Gastrocnemius medialis (tissue), 4 donors: ENCODE measurements at regions of chr10 and their contacts with region 1.

Region 1: DNA sequence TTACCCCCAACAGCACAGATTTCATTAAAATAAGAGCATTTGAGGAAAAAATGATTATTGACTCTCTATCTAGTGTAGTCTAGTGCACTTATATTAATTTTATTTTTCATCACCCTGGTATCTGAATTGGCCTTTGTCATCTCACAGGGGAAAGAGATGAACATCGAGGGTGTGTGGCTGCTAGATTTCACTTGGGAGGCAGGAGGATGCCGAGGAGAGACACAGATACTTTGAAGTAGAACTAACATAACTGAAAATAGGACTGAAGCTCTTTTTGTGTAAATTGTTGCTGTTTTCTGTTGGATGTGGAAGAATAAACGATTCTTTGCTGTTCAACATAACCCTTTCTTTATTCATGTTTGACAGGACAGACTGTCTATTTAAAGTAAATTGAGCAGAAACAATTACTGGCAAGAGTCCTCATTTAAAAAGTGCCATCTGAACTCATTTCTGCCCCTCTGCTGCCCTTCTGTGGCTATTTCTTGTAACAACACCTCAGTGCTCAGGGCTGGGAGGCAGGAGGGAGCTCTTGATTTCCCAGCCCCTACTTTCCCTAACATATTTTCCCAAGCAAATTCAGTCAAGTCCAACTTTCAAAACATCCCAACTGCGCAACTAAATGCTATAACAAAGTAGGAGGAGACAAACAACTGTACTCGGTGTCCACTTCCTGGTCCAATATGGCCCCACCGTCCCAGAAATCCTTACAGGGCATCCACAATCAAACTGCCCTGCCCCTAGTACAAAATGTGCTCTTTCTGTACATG is 15.6 kb downstream of the LYZL1 start:
- DNase-seq: peak; percentile 13 to 27
- ATAC-seq: peak; percentile 71 to 74
- H3K4me3 ChIP-seq: no peak overlapping the region
- H3K27ac ChIP-seq: no peak overlapping the region
- H3K4me1 ChIP-seq: no peaks in the 10 kb centered on the region
- H3K27me3 ChIP-seq: no peaks in the 10 kb centered on the region
- CTCF ChIP-seq: peak; percentile 56 to 79 (median 72)
- POLR2A ChIP-seq: no peak

Region 2: DNA sequence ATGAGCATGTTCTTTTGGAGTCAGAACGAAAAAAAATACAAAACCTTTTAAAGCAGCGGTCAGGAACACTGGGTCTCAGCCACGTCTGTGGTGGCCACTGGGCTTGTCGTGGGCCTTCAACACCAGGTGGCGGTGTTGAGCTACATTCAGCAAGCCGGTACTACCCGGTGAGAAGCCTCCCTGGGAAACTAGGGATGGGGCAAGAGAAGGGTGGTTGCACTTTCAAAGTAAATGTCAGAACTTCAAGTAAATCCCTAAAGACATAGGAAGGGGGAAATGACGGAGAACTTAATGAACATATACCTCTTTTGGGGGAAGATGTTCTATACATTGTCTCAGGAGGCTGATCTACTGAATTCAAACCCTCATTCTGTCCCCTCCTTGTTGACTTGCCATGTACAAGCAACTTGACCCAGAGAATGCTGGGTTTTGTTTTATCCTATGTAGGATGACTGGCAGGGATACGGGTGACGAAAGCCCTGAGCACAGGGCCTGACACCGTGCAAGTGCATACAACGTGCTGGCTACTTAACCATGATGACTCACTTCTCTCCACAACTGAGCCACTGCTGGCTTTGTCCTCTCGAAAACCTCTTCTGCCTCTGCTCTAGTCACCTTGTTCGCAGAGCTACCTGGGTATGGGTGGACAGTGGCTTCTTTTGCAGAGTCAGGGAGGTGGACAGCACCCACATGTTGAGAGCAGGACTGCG is 676.1 kb before region 1 on chr10:
- in situ Hi-C with region 1: loop called in 1 of 4 experiments (anchors 10 kb)
- intact Hi-C with region 1: loop called (anchors 2 kb)
- DNase-seq: peak; percentile 40 to 61
- ATAC-seq: peak; percentile 72 to 89
- H3K4me3 ChIP-seq: no peak overlapping the region
- H3K27ac ChIP-seq: no peak overlapping the region
- H3K4me1 ChIP-seq: no peaks in the 10 kb centered on the region
- H3K27me3 ChIP-seq: no peaks in the 10 kb centered on the region
- CTCF ChIP-seq: peak; percentile 48 to 90 (median 72)
- POLR2A ChIP-seq: no peak

Region 3: DNA sequence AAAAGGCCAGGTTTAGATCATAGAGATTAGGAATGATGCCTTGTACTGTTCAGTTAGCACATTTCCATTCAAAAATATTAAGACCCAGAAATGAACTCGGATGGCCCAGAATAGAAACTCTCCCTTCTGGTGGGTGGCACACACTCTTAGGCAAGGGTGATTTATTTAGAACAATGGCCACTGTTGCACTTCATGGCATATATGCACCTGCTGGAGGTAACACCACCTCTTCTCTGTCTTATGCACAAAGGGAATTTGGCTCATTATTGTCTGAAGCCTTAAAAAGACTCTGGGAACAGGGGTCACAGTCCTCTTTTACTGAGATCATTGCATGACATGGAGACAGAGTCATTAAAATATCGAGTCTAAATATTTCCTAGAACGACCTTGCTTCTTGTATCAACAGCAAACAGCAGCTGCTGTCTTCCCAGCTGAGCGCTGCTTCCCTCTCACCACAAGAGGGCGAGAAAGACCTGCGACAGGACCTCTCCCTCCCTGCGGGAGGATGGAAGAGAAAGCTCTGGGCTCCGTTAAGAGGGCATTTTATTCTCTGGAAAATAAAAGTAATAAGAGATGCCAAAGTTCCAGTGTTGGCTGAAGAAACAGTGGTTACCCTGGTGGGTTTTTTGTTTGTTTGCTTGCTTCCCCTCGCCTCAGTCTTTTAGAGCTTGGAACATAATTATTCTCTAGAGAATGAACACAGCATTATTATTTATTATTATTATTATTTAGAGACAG is 640.7 kb before region 1 on chr10:
- in situ Hi-C with region 1: loop called (anchors 10 kb)
- intact Hi-C with region 1: loop called (anchors 1 kb)
- DNase-seq: peak; percentile 59 to 62
- ATAC-seq: peak; percentile 83 to 93
- H3K4me3 ChIP-seq: no peak overlapping the region
- H3K27ac ChIP-seq: no peak overlapping the region
- H3K4me1 ChIP-seq: peaks cover 4 to 7% of the 10 kb centered on the region in 2 donors
- H3K27me3 ChIP-seq: peaks cover 11 to 15% (median 14%) of the 10 kb centered on the region in 3 donors
- CTCF ChIP-seq: peak; percentile 85 to 96 (median 88)
- POLR2A ChIP-seq: no peak

Region 4: DNA sequence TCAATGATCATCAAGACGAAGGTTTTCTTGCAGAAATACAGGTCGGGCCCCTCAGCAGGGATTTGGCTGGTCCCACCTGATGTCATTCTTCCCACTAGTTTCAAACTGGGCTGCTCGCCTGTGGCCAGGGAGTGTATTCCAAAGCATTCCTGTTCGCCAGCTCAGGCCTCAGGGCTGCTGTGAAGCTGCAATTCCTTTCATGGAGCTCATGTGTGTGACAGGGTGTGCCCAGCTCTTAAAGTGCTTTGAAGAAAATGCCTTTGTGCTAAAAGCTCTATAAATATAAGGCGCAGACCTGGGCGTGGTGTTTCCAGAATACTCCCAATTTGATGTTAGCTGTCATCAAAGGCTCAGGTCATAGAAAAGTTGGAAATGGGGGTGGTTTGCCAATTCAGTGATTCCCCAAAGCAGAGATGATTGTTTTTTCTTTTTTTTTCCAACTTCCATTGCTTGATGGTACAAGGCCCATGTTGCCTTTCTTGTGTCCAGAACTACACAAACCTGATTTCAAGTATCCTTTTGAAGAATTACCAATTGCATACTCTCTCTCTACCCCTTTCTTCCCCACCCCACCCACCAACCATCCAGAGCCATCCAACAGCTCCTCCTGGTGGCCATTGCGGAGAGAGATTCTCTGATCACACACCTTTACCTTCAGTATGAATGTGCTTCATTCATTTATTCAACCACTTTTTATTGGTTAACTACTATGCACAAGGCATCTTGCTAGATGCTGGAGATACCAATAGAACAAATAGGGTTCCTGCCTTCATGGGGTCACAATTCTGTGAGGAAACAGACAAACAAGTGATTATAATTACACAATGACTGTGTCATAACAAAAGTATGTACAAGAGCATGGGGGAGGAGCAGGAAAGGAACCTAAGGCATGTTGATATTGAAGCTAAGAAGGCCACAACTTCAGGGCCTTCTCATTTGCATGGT is 312.8 kb before region 1 on chr10:
- in situ Hi-C with region 1: loop called in 1 of 4 experiments (anchors 10 kb)
- intact Hi-C with region 1: no loop called
- DNase-seq: no peak
- ATAC-seq: peak in 1 of 2 donors; percentile 51
- H3K4me3 ChIP-seq: no peak overlapping the region
- H3K27ac ChIP-seq: no peak overlapping the region
- H3K4me1 ChIP-seq: no peaks in the 10 kb centered on the region
- H3K27me3 ChIP-seq: no peaks in the 10 kb centered on the region
- CTCF ChIP-seq: peak; percentile 65 to 82 (median 74)
- POLR2A ChIP-seq: no peak

Region 5: DNA sequence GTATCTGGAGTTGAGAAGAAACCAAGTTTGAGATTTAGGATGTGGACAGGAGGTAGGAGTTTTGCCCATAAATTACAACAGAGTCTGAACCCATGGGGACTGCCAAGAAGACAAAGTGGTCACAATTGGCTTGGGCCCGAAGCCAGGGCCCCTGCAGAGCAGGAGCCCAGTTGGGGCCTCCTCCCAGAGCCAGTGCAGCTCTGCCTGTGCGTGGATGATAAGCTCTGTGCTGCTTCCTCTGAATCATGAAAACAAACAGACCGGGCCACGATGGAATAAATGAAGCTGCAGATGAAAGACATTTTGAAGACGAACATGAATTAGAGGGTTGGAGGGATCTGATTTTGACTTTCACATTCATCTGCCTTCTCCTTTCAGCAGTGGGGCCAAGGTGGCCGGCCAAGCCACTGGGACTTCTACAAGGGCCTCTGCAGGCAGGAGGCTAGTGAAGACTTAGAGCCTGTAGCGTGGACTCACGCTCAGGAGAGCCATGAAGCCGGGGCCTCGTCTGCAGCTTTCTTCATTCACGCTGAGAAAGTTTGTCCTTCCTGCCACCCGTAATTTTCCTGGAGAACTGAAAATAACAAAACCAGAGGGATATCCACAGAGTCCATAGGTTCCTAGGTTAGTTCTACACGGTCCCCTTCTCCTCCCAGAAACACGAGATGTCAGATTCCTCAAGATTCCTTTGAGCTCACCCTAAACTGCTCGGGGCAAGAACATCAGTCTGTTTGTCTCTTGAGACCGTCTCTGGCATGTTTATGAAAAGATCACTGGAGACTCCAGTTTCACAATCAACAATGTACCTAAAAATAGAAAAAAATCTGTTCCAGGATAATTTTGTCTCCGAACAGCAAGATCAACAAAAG is 172.3 kb before region 1 on chr10:
- in situ Hi-C with region 1: no loop called
- intact Hi-C with region 1: loop called (anchors 10 kb)
- DNase-seq: no peak
- ATAC-seq: peak in 1 of 2 donors; percentile 44
- H3K4me3 ChIP-seq: no peak overlapping the region
- H3K27ac ChIP-seq: peak overlapping the region in 2 of 4 donors; percentile 1 to 25
- H3K4me1 ChIP-seq: peaks cover 9 to 20% of the 10 kb centered on the region in 2 donors
- H3K27me3 ChIP-seq: no peaks in the 10 kb centered on the region
- CTCF ChIP-seq: no peak
- POLR2A ChIP-seq: no peak

Region 6: DNA sequence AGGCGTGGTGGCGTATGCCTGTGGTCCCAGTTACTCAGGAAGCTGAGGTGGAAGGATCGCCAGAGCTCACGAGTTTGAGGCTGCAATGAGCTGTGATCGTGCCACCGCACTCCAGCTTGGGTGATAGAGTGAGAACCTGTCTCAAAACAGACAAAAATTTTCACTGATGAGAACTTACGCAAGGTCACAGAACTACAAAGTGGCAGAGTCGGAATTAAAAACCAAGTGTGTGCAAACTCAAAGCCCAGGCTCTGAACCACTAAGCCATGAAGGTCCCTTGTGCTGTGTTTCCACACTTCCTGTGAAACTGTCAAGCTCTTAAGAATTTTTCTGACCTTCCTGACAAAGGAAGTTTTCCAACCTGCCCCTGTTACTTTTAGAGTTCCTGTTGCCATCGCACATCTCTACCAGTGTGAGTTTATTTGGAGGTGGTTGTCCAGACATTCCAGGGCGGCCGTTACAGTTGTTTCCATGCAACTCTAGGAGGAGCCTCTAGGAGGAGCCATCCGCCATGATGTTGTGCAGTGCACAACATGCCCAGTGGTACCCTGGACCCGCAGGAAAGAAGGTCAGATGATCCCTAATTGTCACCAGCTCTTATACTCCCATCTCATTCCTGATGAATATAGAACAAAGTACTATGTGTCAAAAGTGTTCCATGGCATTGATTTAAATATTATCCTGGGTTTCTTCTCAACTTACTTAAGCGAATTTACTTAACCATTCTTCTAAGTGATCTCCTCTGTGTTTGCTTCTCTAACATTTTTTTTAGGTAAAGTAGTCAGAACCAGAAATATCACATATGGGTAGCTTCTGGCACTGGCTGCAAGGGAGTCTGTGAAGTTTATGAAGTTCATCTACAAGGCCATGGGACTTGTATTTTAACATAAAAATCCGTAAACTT is 64.6 kb before region 1 on chr10:
- in situ Hi-C with region 1: loop called in 1 of 4 experiments (anchors 10 kb)
- intact Hi-C with region 1: loop called (anchors 1 kb)
- DNase-seq: no peak
- ATAC-seq: no peak
- H3K4me3 ChIP-seq: no peak overlapping the region
- H3K27ac ChIP-seq: no peak overlapping the region
- H3K4me1 ChIP-seq: no peaks in the 10 kb centered on the region
- H3K27me3 ChIP-seq: no peaks in the 10 kb centered on the region
- CTCF ChIP-seq: peak in 2 of 5 experiments; percentile 34 to 48
- POLR2A ChIP-seq: no peak